RWPE1 (cell line): ENCODE measurements at regions of chr9 and their contacts with region 1.

Region 1: DNA sequence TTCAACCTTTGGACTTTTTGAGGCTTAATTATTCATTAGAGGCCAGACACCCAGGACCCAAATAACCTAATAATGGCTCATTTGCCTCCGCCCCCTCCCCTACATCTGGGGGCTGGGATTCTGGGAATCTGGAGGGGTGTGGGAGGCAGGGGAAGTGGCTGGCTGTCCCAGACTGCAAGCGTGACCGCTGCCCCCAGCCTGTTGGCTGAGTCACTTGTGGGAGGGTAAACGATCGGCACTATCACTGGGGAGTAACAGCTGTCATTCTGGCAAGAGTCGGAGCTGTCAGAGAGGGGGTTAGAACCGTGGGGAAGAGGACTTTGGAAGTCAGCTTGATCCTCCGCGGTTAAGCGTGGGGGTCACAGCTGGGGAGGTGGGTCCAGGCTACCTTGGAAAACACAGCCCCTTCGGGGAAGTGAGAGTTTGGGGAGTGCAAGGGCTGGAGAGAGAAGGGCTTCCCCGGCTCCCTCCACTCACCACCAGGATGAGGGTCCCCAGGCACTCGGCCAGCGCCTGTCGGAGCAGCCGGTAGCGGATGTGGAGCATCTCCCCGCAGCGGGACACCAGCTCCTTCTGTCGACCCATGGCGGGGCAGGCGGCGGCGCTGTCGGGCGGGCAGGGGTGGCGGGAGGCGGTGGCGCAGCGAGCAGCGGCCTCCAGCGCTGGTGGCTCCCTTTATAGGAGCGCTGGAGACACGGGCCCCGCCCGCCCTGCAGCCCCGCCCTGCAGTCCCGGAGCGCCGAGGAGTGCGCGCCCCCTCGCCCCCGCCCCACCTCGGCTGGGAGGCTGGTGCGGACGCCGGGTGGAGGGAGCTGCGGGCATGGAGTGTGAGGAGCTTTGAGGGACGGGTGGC is at the start of gene AQP3:
- DNase-seq: peak; percentile 78
- H3K27ac ChIP-seq: peak within 1 kb of the TSS; percentile 76
- CTCF ChIP-seq: no peak; the same call in none of the 2 replicates

Region 2: DNA sequence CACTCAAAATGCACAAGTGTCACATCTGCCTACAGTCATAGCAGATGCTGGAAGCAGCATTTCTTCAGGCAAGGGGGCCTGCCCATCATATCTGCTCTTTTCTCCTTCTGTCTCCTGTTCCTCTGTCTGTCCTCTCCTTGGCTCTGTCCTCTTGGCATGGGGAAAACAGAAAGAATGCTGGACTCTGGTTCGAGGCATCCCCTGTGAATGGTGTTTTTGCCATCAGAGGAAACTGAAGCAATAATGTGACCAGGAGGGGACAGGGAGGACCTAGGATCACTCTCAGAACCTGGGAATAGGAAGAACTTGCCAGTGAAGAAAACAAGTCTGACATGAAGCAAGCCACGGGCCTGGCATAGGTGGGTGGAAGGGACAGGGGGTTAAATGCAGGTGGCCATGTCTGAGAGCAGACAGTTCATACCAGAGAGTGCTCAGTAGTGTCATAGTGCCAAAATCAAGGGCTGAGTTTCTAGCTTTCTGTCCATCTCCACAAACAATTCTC is 80.1 kb before region 1 on chr9:
- CTCF ChIA-PET with region 1: no interaction called
- POLR2A ChIA-PET with region 1: no interaction called
- DNase-seq: no peak
- H3K27ac ChIP-seq: no peak overlapping the region
- CTCF ChIP-seq: no peak

Region 3: DNA sequence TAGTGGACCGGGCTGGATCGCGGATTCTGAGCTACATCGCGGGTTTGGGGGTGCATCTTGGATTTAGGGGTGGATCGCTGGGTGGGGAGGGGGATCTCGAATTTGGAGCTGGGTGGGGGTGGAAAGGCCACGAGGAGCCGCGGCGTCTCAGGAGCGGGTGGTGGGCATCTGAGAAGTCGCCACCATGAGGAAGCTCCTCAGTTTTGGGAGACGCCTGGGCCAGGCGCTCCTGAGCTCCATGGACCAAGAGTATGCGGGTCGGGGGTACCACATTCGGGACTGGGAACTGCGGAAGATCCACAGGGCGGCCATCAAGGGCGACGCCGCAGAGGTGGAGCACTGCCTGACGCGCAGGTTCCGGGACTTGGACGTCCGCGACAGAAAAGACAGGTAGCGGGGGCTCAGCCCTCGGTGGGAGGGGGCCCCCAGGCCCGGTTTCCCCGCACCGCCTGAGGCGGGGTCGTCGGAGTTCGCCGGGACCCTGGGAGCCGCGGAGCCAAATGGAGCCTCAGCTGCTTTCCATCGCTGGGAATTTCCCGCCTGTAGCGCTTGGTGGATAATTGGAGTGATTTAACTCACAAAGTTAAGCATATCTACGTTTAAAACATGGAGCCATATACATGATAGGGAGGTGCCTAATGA is 77.3 kb after region 1 on chr9:
- CTCF ChIA-PET with region 1: no interaction called
- POLR2A ChIA-PET with region 1: interaction called, 10 read pairs
- DNase-seq: no peak
- H3K27ac ChIP-seq: peak overlapping the region; percentile 72
- CTCF ChIP-seq: no peak